ENCODE measurements at regions of chr3 and their contacts with region 1.

Region 1: DNA sequence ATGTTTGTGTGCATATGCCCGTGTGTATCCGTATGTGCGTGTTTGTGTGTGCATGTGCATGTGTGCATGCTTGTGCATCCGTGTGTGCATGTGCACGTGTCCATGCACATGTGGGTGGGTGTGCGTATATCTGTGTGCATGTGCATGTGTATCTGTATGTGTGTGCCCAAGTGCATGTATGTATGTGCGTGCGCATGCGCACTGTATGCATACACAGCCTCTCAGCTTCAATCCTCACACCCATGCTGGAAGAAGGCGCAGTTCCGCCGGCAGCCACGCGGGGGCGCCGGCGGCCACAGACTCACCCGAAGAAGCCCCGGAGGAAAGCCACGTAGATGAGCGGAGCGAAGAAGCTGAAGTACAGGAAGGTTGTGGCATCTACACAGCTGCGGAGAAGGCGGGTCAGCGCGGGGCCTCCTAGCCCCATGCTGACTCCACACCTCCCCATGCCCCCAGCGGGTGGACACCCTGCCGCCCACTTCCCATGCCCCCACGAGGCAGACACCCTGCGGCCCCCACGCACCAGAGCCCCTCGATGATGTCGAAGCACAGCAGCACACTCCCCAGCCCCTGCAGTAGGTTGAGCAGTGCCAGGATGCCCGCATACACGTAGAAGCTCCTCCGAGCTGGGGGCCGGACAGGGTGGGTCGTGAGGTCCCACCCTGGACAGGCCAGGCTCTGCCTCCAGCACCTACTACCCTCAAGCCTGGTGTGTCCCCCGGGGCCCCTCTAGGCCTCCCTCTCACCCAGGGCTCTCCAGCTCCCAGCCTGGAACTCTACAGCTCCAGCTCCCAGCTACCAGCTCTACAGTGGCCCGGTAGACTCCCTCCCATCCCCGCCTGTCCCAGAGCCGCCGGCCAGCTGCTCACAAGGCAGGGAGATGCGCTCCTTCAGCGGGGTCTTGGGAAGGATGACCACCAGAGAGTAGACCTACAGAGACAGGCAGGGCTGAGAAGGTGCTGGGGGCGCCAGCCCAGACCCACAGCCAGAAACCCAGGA is 15.4 kb downstream of the TPRA1 start:
- DNase-seq: peak; percentile 31 to 89
- H3K4me3 ChIP-seq: no peak overlapping the region
- H3K27ac ChIP-seq: no peak overlapping the region
- H3K4me1 ChIP-seq: peaks cover 0 to 3% (median 2%) of the 10 kb centered on the region in 4 experiments; a peak in 1 of 7 replicates
- H3K27me3 ChIP-seq: no peaks in the 10 kb centered on the region
- CTCF ChIP-seq: peak in 2 of 3 experiments; percentile 88 to 94; a peak in 3 of 4 replicates
- EP300 ChIP-seq: no peak
- POLR2A ChIP-seq: no peak
- RAD21 ChIP-seq: peak; percentile 71 to 86

Region 2: GRCh38 chr3:127238602-127239001 is 336.6 kb before region 1 on chr3:
- CTCF ChIA-PET with region 1: no interaction called
- POLR2A ChIA-PET with region 1: no interaction called
- DNase-seq: no peak
- H3K4me3 ChIP-seq: no peak overlapping the region
- H3K27ac ChIP-seq: no peak overlapping the region
- H3K4me1 ChIP-seq: no peaks in the 10 kb centered on the region
- H3K27me3 ChIP-seq: no peaks in the 10 kb centered on the region
- CTCF ChIP-seq: no peak
- EP300 ChIP-seq: no peak
- POLR2A ChIP-seq: no peak
- RAD21 ChIP-seq: no peak

Region 3: GRCh38 chr3:127556565-127556964 is 18.6 kb before region 1 on chr3:
- CTCF ChIA-PET with region 1: interaction called, 12 read pairs
- POLR2A ChIA-PET with region 1: no interaction called
- DNase-seq: no peak
- H3K4me3 ChIP-seq: no peak overlapping the region
- H3K27ac ChIP-seq: no peak overlapping the region
- H3K4me1 ChIP-seq: no peaks in the 10 kb centered on the region
- H3K27me3 ChIP-seq: no peaks in the 10 kb centered on the region; a peak in 1 of 7 replicates
- CTCF ChIP-seq: peak; percentile 52 to 78 (median 67)
- EP300 ChIP-seq: no peak
- POLR2A ChIP-seq: no peak
- RAD21 ChIP-seq: peak; percentile 34 to 44; a peak in 3 of 4 replicates

Region 4: GRCh38 chr3:127590593-127591477 is 15.7 kb after region 1 on chr3 and contains the start of gene TPRA1:
- CTCF ChIA-PET with region 1: interaction called, 77 read pairs
- POLR2A ChIA-PET with region 1: interaction called, 10 read pairs
- DNase-seq: peak; percentile 80 to 89
- H3K4me3 ChIP-seq: peak within 1 kb of the TSS; percentile 68 to 81 (median 75)
- H3K27ac ChIP-seq: peak within 1 kb of the TSS; percentile 62; the same call in 1 of the 2 replicates
- H3K4me1 ChIP-seq: peaks cover 10 to 19% (median 14%) of the 10 kb centered on the region in 4 experiments
- H3K27me3 ChIP-seq: peaks cover 0 to 6% (median 1%) of the 10 kb centered on the region in 4 experiments; a peak in 1 of 7 replicates
- CTCF ChIP-seq: peak in 2 of 3 experiments; percentile 4 to 16; a peak in 2 of 4 replicates
- EP300 ChIP-seq: peak in 1 of 2 experiments; percentile 51; a peak in 1 of 3 replicates
- POLR2A ChIP-seq: peak in 1 of 2 experiments; percentile 59; a peak in 2 of 3 replicates
- RAD21 ChIP-seq: peak in 1 of 2 experiments; percentile 40; a peak in 3 of 4 replicates
- total RNA-seq, gene TPRA1: 17.9 and 18.8 TPM in 2 replicates

Region 5: DNA sequence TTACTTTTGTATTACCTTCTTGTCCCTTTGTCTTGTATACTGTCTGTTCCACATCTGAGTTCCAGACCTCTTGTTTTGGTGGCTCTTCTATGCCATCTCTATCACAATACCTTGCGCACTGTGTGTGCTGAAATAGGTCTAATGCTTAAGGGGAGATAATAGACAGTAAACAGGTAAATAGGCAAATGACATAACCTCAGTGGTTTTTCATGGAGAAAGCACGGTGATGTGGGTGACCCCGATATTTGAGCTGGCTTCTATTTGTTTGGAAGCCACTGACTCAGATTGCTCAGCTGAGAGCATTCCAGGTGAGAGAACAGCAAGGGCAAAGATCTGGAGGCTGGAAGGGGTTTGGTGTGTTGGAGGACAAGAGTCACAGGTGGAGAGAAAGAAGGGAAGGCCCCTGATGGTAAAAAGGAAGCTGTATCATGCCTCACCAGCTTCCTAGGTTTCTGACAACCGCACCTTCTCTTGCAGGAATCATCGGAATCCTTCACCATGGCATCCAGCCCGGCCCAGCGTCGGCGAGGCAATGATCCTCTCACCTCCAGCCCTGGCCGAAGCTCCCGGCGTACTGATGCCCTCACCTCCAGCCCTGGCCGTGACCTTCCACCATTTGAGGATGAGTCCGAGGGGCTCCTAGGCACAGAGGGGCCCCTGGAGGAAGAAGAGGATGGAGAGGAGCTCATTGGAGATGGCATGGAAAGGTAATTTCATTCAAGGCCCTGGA is 23.8 kb after region 1 on chr3:
- CTCF ChIA-PET with region 1: interaction called, 21 read pairs
- POLR2A ChIA-PET with region 1: interaction called, 12 read pairs
- DNase-seq: no peak
- H3K4me3 ChIP-seq: peak overlapping the region; percentile 74 to 84 (median 78)
- H3K27ac ChIP-seq: peak overlapping the region; percentile 97
- H3K4me1 ChIP-seq: peaks cover 9 to 12% (median 9%) of the 10 kb centered on the region in 4 experiments
- H3K27me3 ChIP-seq: no peaks in the 10 kb centered on the region
- CTCF ChIP-seq: no peak
- EP300 ChIP-seq: no peak
- POLR2A ChIP-seq: peak in 1 of 2 experiments; percentile 22; a peak in 1 of 3 replicates
- RAD21 ChIP-seq: no peak

Region 6: DNA sequence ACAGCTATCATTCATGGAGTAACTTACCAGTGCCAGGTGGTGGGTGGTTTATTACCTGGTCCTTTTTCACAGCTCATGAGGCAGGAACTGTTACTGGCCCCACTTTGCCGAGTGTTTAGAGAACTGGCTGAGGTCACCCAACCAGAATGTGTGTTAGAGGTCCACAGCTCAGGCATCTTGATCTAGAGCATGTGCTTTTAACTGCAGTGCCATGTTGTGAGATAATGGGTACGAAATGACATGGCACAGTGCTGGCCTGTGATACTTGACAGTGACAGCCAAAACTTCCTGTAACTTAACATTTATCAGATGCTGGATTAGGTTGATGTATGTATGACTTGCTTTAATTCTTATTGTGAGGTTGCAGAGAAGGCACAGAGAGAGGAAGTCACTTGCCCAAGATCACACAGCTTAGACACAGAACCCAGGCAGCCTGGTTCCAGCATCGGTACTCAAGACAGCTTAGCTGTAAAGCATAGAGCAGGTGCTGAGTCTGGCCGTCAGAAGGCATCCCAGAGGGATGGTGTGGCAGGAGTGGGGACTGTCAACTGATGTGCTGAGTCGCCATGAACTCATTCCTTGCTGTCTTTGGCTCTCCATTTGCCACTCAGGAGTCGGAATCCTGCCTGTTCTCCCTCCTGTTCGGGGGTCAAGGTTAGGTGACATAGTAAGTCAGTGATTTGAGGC is 32.6 kb after region 1 on chr3:
- CTCF ChIA-PET with region 1: interaction called, 21 read pairs
- POLR2A ChIA-PET with region 1: interaction called, 5 read pairs
- DNase-seq: no peak
- H3K4me3 ChIP-seq: no peak overlapping the region
- H3K27ac ChIP-seq: no peak overlapping the region
- H3K4me1 ChIP-seq: no peaks in the 10 kb centered on the region
- H3K27me3 ChIP-seq: no peaks in the 10 kb centered on the region
- CTCF ChIP-seq: no peak
- EP300 ChIP-seq: no peak
- POLR2A ChIP-seq: no peak
- RAD21 ChIP-seq: no peak

Region 7: GRCh38 chr3:127622772-127623576 is 47.8 kb after region 1 on chr3:
- CTCF ChIA-PET with region 1: interaction called, 16 read pairs
- POLR2A ChIA-PET with region 1: interaction called, 4 read pairs
- DNase-seq: no peak
- H3K4me3 ChIP-seq: no peak overlapping the region
- H3K27ac ChIP-seq: no peak overlapping the region
- H3K4me1 ChIP-seq: no peaks in the 10 kb centered on the region
- H3K27me3 ChIP-seq: peaks cover 3 to 14% (median 10%) of the 10 kb centered on the region in 4 experiments
- CTCF ChIP-seq: no peak
- EP300 ChIP-seq: no peak
- POLR2A ChIP-seq: no peak
- RAD21 ChIP-seq: no peak